ENCODE measurements at regions of chr16 and their contacts with region 1.

Region 1: GRCh38 chr16:85234310-85235204 is 122.3 kb upstream of the CIBAR2 start:
- DNase-seq: no peak

Region 2: GRCh38 chr16:85114909-85115567 is 119.5 kb before region 1 on chr16:
- intact Hi-C with region 1: loop called (anchors 10 kb)
- DNase-seq: peak; percentile 95

Region 3: DNA sequence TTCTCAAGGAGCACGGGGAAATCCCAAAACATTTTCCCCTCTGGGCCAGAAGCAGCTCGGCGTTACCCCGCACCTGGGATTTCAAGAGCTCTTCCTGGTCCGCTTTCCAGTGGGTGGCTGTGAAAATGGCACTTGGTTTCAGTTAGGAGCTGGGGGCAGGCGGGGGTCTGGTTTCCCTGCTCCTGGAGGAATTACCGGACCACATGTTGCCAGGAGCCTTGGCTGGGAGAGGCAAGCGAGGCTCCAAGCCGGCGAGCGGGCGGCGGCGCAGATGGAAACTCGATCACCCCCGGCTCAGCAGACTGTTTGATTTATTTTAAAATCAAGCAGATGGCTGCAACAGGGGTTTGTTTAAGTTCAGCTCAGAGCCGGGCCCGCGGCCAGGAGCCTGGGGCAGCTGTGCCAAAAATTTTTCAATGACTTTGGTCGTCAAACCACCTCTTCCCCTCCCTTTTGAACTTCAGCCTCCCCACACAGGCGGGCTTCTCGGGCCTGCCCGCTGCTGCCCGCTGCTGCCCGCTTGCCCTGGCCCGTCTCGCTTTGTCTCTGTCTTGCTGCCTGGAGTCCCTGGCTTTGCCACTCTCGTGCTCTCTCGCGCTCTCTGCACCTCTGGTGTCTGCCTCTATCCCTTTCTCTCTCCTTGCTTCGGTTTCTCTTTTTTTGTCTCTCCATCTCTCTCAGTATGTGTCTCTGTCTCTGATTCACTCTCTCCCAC is 14.3 kb before region 1 on chr16:
- intact Hi-C with region 1: loop called (anchors 1 kb)
- DNase-seq: peak; percentile 87

Region 4: GRCh38 chr16:85305996-85306792 is 71.6 kb after region 1 on chr16:
- intact Hi-C with region 1: no loop called
- DNase-seq: peak; percentile 86